ENCODE measurements at regions of chr15 and their contacts with region 1.

Region 1: GRCh38 chr15:70722266-70723121 is 40.9 kb downstream of the UACA start:
- DNase-seq: no peak
- H3K4me3 ChIP-seq: no peak overlapping the region
- CTCF ChIP-seq: peak; percentile 42

Region 2: GRCh38 chr15:70679919-70680231 is 42.6 kb before region 1 on chr15:
- CTCF ChIA-PET with region 1: interaction called, 118 read pairs
- POLR2A ChIA-PET with region 1: no interaction called
- DNase-seq: no peak
- H3K4me3 ChIP-seq: no peak overlapping the region
- CTCF ChIP-seq: no peak

Region 3: GRCh38 chr15:70690491-70691257 is 31.8 kb before region 1 on chr15:
- CTCF ChIA-PET with region 1: interaction called, 16 read pairs
- POLR2A ChIA-PET with region 1: no interaction called
- DNase-seq: no peak
- H3K4me3 ChIP-seq: no peak overlapping the region
- CTCF ChIP-seq: no peak

Region 4: GRCh38 chr15:70701891-70702568 is 20.5 kb before region 1 on chr15:
- CTCF ChIA-PET with region 1: interaction called, 28 read pairs
- POLR2A ChIA-PET with region 1: no interaction called
- DNase-seq: no peak
- H3K4me3 ChIP-seq: peak overlapping the region; percentile 29
- CTCF ChIP-seq: no peak

Region 5: DNA sequence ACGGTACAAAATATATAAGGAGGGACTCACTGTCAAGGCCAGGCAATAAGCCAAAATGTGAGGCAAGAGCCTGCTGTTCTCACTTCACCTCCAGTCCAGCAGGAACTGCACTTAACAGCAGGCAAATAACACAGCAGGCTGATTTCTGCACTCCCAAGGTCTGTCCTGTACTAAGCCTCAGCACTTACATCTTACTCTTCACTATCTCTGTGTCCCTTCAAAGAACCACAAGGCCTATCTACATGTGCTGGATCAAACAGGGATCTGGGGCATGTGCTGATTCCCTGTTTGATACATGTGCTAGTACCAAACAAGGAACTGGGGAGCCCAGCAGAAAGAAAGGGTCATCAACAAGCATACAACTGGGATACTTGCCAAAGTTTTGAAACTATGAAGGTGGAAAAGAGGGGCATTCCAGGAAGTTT is 18.6 kb after region 1 on chr15:
- CTCF ChIA-PET with region 1: interaction called, 21 read pairs
- POLR2A ChIA-PET with region 1: no interaction called
- DNase-seq: peak; percentile 63
- H3K4me3 ChIP-seq: no peak overlapping the region
- CTCF ChIP-seq: no peak

Region 6: DNA sequence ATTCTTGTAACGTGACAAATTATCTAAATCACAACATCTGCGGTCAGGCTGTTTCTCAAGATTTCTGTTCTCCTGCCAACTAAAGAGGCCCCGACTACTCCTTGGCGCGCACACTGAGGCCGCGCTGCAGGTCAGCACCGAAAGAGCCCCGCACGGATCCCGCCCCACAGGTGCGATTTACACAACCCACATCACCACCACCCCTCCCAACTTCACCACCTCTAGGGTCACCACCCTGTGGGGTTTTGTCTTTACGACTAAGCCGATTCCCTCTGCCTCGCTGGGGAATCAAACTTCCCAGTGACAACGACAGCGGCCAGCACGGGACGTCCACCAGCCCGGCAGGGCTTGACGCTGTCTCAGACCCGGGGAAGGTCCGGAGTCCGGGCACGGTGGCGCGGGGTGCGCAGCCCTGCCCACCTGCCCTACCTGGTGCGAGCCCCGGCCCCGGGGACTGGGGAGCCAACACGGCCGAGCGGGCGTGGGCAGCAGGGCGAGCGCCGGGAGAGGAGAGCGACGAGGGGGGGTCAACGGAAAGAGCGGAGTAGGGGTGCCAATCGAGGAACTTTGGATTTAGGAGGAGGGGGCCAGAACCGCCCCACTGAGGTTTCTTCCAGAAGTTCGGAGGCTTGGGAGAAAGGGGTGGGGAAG is 40.1 kb after region 1 on chr15:
- CTCF ChIA-PET with region 1: interaction called, 11 read pairs
- POLR2A ChIA-PET with region 1: no interaction called
- DNase-seq: no peak
- H3K4me3 ChIP-seq: peak overlapping the region; percentile 77
- CTCF ChIP-seq: no peak